MCF 10A (cell line): ENCODE measurements at regions of chr6 and their contacts with region 1.

Region 1: GRCh38 chr6:151440930-151441329 is 11.0 kb downstream of the RMND1 start:
- DNase-seq: no peak
- H3K4me3 Mint-ChIP-seq: no peak overlapping the region
- H3K27ac Mint-ChIP-seq: no peak overlapping the region
- H3K4me1 Mint-ChIP-seq: peaks cover 23% of the 10 kb centered on the region
- H3K27me3 Mint-ChIP-seq: no peaks in the 10 kb centered on the region
- CTCF ChIP-seq: peak; percentile 43

Region 2: DNA sequence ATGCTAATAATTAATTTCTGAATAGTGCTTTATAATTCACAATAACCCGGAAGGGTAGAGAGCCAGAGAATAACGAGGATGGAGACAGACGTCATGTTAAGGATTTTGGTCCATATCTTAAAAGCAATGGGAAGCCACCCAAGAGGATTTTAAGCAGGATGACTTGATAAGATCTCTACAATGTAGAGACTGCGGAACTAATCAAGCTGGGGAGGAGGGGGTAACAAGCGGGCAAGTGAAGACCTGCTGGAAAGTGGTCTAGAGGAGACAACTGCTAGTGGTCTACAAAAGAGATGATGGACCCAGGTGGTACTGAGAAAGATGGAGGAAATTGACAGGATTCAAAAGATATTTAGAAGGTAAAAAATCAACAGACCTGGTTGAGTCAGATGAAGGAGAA is 56.8 kb before region 1 on chr6:
- CTCF ChIA-PET with region 1: no interaction called
- POLR2A ChIA-PET with region 1: no interaction called
- intact Hi-C with region 1: no loop called
- DNase-seq: no peak
- H3K4me3 Mint-ChIP-seq: no peak overlapping the region
- H3K27ac Mint-ChIP-seq: no peak overlapping the region
- H3K4me1 Mint-ChIP-seq: peaks cover 16% of the 10 kb centered on the region
- H3K27me3 Mint-ChIP-seq: no peaks in the 10 kb centered on the region
- CTCF ChIP-seq: no peak

Region 3: GRCh38 chr6:151451950-151452749 is 11.2 kb after region 1 on chr6 and contains the start of gene RMND1:
- CTCF ChIA-PET with region 1: interaction called, 3 read pairs
- POLR2A ChIA-PET with region 1: interaction called, 18 read pairs
- intact Hi-C with region 1: no loop called
- DNase-seq: peak; percentile 100
- H3K4me3 Mint-ChIP-seq: peak within 1 kb of the TSS; percentile 99
- H3K27ac Mint-ChIP-seq: peak within 1 kb of the TSS; percentile 87
- H3K4me1 Mint-ChIP-seq: peaks cover 36% of the 10 kb centered on the region
- H3K27me3 Mint-ChIP-seq: no peaks in the 10 kb centered on the region
- CTCF ChIP-seq: no peak
- total RNA-seq, gene RMND1: 32.9 and 37.6 TPM in 2 replicates

Region 4: GRCh38 chr6:151475653-151476523 is 35.0 kb after region 1 on chr6:
- CTCF ChIA-PET with region 1: interaction called, 4 read pairs
- POLR2A ChIA-PET with region 1: interaction called, 3 read pairs
- intact Hi-C with region 1: loop called (anchors 2 kb)
- DNase-seq: peak; percentile 69
- H3K4me3 Mint-ChIP-seq: no peak overlapping the region
- H3K27ac Mint-ChIP-seq: no peak overlapping the region
- H3K4me1 Mint-ChIP-seq: no peaks in the 10 kb centered on the region
- H3K27me3 Mint-ChIP-seq: no peaks in the 10 kb centered on the region
- CTCF ChIP-seq: peak; percentile 68

Region 5: DNA sequence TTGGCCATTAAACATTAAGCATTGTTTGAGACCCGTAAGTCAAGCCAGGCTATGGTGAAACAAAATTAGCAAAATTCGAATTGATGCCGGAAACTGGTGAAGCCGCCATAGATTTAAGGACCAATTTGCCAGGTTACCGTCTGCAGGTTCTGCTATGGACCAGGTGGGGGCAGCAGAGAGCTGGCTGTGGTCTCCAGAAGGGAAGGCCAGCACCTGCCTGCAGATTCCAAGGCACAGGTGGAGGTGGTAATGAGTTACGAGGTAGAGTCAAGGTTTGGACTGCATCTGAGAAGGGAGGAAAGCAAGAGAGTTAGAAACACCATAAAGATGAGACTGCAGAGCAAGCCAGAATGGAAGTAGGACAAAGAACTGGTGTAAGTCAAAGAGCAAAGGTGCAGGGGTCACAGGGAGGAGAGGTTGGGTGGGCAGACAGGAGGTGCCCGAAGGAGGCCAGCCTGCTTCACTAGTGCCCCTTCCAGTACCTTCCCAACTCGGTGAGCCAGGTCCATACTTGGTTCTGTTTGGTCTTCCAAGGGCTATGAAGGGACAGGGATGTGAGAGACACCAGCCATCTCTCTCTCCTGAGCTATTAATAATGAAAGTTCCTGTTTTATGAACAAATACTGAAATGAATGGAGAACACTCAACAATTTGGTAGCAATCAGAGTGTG is 235.0 kb after region 1 on chr6:
- CTCF ChIA-PET with region 1: no interaction called
- POLR2A ChIA-PET with region 1: no interaction called
- intact Hi-C with region 1: no loop called
- DNase-seq: peak; percentile 71
- H3K4me3 Mint-ChIP-seq: no peak overlapping the region
- H3K27ac Mint-ChIP-seq: no peak overlapping the region
- H3K4me1 Mint-ChIP-seq: no peaks in the 10 kb centered on the region
- H3K27me3 Mint-ChIP-seq: no peaks in the 10 kb centered on the region
- CTCF ChIP-seq: peak; percentile 89